GM10248 (cell line): ENCODE measurements at regions of chr9 and their contacts with region 1.

Region 1: GRCh38 chr9:68974431-68974830 is 39.5 kb downstream of the PRKACG start:
- DNase-seq: peak; percentile 66
- CTCF ChIP-seq: no peak

Region 2: GRCh38 chr9:68949271-68950000 is 25.0 kb before region 1 on chr9:
- CTCF ChIA-PET with region 1: interaction called, 19 read pairs
- POLR2A ChIA-PET with region 1: no interaction called
- DNase-seq: no peak
- CTCF ChIP-seq: peak; percentile 58

Region 3: DNA sequence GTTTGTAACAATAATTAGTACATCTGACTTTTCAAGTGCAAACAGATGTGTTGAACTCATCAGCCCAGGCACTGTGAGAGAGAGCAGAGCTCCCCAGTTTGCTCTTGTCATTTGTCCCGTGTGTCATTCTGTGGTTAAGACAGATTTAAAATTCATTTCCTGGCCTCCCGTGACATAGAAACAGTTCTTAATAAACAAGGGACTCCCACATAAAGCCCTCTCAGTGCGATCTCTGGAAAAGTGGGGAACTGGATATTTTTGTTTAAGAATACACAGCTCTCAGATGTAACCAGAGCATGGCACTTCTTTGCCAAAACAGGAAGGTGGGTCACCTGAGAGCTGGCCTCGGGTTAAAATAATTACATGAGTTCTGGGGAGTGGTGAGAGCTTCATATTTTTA is 19.1 kb before region 1 on chr9:
- CTCF ChIA-PET with region 1: interaction called, 23 read pairs
- POLR2A ChIA-PET with region 1: interaction called, 3 read pairs
- DNase-seq: no peak
- CTCF ChIP-seq: no peak

Region 4: DNA sequence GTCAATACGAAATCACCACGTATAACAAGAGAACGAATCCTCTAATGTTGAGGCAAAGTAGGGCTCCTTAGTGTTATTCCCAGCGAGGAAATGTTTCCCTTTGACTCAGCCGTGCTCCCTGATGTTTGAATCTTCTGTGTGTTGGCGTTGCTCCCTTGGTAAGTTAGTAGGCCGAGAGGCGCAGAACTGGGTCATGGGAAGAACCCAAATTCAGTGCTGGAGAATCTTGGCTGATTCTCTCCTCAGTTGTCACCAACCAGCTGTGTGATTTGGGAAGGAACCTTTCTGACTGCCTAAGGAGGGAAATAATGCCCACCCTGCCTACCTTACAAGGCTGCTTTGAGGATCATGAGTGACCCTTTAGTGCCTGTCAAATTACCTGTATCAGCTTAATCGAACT is 17.0 kb after region 1 on chr9:
- CTCF ChIA-PET with region 1: no interaction called
- POLR2A ChIA-PET with region 1: no interaction called
- DNase-seq: no peak
- CTCF ChIP-seq: no peak

Region 5: GRCh38 chr9:69605406-69605805 is 631.0 kb after region 1 on chr9:
- CTCF ChIA-PET with region 1: no interaction called
- POLR2A ChIA-PET with region 1: no interaction called
- DNase-seq: no peak
- CTCF ChIP-seq: no peak